ENCODE measurements at regions of chr19 and their contacts with region 1.

Region 1: GRCh38 chr19:44643605-44644401 is at the start of gene PVR:
- DNase-seq: peak; percentile 62 to 81
- ATAC-seq: peak; percentile 90 to 96 (median 93)
- H3K4me3 ChIP-seq: peak within 1 kb of the TSS; percentile 69 to 96 (median 88)
- H3K27ac ChIP-seq: peak within 1 kb of the TSS; percentile 51 to 95 (median 91)
- H3K4me1 ChIP-seq: peaks cover 6 to 55% (median 40%) of the 10 kb centered on the region in 9 donors
- H3K27me3 ChIP-seq: no peaks in the 10 kb centered on the region
- CTCF ChIP-seq: peak in 4 of 9 donors; percentile 7 to 30 (median 14)
- total RNA-seq, gene PVR: 38.3 to 108 (median 41.8) TPM

Region 2: DNA sequence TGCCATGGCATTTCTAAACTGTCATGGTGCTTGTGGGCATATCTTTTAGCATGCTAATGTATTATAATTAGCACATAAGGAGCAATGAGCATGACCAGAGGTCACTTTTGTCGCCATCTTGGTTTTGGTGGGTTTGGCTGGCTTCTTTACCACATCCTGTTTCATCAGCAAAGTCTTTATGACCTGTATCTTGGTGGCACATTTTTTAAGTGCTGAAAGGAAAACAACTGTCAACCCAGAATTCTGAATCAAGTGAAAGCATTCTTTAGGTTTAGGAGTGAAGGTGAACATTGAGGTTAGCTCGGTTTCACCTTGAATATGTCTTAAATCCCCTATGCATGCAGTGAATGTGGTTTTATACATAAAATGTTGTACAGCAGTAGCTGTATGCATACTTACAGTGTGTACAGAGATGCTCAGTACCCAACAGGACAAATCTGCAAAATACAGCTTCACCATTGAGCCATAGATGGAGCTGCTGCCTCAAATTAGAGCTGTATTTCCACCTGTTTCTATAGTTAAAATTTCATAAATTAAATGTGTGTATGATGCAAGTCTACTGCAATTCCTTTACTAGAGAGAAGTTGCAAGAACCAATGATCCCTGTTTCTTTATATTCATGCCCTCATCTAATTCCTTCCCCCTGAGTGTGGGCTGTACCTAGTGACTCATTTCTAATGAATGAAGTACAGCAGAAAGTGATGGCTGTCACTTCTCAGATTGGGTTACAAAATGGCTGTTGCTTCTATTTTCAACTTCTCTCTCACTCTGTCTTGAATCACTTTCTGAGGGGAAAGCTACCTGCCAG is 55.6 kb before region 1 on chr19:
- intact Hi-C with region 1: loop called in 3 of 10 experiments (anchors 5 kb)
- DNase-seq: no peak
- ATAC-seq: peak in 3 of 8 donors; percentile 31 to 55 (median 32)
- H3K4me3 ChIP-seq: no peak overlapping the region
- H3K27ac ChIP-seq: peak overlapping the region in 6 of 10 donors; percentile 9 to 59 (median 30)
- H3K4me1 ChIP-seq: peaks cover 0 to 30% (median 4%) of the 10 kb centered on the region in 9 donors
- H3K27me3 ChIP-seq: no peaks in the 10 kb centered on the region
- CTCF ChIP-seq: peak in 5 of 9 donors; percentile 13 to 45 (median 32)

Region 3: DNA sequence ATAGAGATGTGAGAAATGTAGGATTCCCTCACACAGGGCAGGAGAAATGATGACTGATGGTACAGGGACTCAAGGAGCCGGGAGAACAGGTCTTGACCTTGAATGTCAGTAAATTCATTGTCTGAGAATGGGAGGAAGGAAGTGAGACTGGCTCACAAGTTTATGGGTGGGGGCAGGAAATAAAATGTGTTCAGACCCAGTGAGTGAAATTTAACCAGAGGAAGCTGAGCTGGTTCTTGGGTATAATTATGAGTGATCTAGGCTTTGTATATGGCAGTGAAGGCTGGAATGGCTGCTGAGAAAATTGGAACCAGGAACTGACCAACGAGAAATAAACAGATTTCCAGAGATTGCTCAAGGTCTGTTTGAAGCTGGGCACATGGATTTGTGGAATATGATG is 36.8 kb before region 1 on chr19:
- intact Hi-C with region 1: loop called in 1 of 10 experiments (anchors 5 kb)
- DNase-seq: peak in 1 of 2 donors; percentile 50
- ATAC-seq: peak; percentile 71 to 87 (median 86)
- H3K4me3 ChIP-seq: no peak overlapping the region
- H3K27ac ChIP-seq: peak overlapping the region; percentile 20 to 84 (median 64)
- H3K4me1 ChIP-seq: peaks cover 0 to 48% (median 26%) of the 10 kb centered on the region in 9 donors
- H3K27me3 ChIP-seq: peaks cover 0 to 2% (median 0%) of the 10 kb centered on the region in 7 donors
- CTCF ChIP-seq: no peak

Measured in heart right ventricle (tissue), 16 donors.